Naive thymus-derived CD4-positive, alpha-beta T cell (primary cell): ENCODE measurements at regions of chr3 and their contacts with region 1.

Region 1: GRCh38 chr3:129316131-129317013 is 37.7 kb downstream of the HMCES start:
- DNase-seq: peak; percentile 80 to 96 (median 88)
- ATAC-seq: peak; percentile 75
- H3K4me3 ChIP-seq: peak overlapping the region; percentile 89
- H3K4me3 Mint-ChIP-seq: peak overlapping the region; percentile 70 to 97 (median 88)
- H3K27ac ChIP-seq: peak overlapping the region; percentile 88
- H3K27ac Mint-ChIP-seq: peak overlapping the region; percentile 80 to 94 (median 88)
- H3K4me1 ChIP-seq: peaks cover 5 to 10% of the 10 kb centered on the region in 2 donors
- H3K4me1 Mint-ChIP-seq: peaks cover 17 to 31% (median 24%) of the 10 kb centered on the region in 7 donors
- H3K27me3 ChIP-seq: no peaks in the 10 kb centered on the region
- H3K27me3 Mint-ChIP-seq: peaks cover 0 to 2% (median 0%) of the 10 kb centered on the region in 5 donors

Region 2: DNA sequence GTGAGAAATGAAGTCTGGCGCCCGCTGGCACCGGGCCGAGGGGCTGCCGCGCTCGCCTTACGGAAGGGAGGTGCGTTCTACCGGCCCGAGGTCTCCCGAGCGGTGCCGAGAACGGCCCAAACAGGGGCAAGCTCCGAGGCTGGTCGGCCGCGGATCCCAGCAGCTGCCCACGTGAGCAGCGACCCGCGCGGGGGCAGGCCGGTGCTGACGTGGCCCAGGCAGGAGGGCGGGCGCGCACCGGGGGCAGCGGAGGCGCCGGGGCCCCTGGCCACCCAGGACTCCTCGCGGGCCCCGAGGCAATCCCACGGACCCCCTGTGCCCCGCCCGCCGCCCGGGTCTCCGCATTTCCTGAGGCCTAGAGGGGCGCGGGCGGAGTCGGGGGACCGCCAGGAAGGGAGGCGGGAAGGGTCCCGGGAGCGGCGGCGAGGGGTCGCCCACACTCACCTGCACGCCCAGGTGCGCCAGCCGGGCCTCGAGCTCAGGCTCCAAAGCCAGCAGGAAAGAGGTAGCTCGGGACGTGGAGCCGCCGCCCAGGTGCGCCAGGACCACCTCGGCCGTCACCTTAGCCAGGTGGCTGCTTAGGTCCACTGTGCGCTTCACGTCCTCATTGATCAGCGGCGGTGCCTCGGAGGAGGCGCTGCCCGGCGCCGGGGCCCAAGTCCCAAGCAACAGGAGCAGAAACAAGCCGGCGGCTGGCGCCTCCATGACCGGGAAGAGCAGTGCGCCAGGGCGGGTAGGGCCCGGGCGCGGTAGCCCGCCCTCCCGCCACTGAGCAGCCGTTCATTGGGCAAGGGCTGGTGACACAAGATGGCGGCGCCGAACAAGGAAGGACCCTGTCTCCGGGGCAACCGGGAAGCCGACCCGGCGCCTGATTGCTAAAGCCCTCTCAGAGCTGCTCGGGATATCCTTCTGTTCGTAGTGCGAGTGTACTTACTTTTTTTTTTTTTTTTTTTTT is 666.0 kb before region 1 on chr3 and contains the start of gene RPN1:
- CTCF ChIA-PET with region 1: no interaction called
- POLR2A ChIA-PET with region 1: interaction called, 9 read pairs
- intact Hi-C with region 1: loop called in 1 of 2 experiments (anchors 10 kb)
- DNase-seq: peak; percentile 81 to 98 (median 97)
- ATAC-seq: peak; percentile 98
- H3K4me3 ChIP-seq: peak within 1 kb of the TSS; percentile 94
- H3K4me3 Mint-ChIP-seq: peak within 1 kb of the TSS; percentile 83 to 92 (median 90)
- H3K27ac ChIP-seq: peak within 1 kb of the TSS; percentile 99
- H3K27ac Mint-ChIP-seq: peak within 1 kb of the TSS; percentile 73 to 94 (median 92)
- H3K4me1 ChIP-seq: peaks cover 12 to 17% of the 10 kb centered on the region in 2 donors
- H3K4me1 Mint-ChIP-seq: peaks cover 25 to 43% (median 37%) of the 10 kb centered on the region in 7 donors
- H3K27me3 ChIP-seq: no peaks in the 10 kb centered on the region
- H3K27me3 Mint-ChIP-seq: no peaks in the 10 kb centered on the region
- total RNA-seq, gene RPN1: 76.7 to 203 (median 88.5) TPM

Region 3: GRCh38 chr3:129016356-129016719 is 300.0 kb before region 1 on chr3:
- CTCF ChIA-PET with region 1: interaction called, 3 read pairs
- POLR2A ChIA-PET with region 1: interaction called, 20 read pairs
- intact Hi-C with region 1: no loop called
- DNase-seq: peak in 7 of 9 donors; percentile 54 to 71 (median 65)
- ATAC-seq: peak; percentile 85
- H3K4me3 ChIP-seq: peak overlapping the region; percentile 41
- H3K4me3 Mint-ChIP-seq: peak overlapping the region; percentile 68 to 87 (median 84)
- H3K27ac ChIP-seq: peak overlapping the region; percentile 75
- H3K27ac Mint-ChIP-seq: peak overlapping the region; percentile 90 to 100 (median 97)
- H3K4me1 ChIP-seq: peaks cover 26 to 33% of the 10 kb centered on the region in 2 donors
- H3K4me1 Mint-ChIP-seq: peaks cover 31 to 66% (median 48%) of the 10 kb centered on the region in 7 donors
- H3K27me3 ChIP-seq: no peaks in the 10 kb centered on the region
- H3K27me3 Mint-ChIP-seq: no peaks in the 10 kb centered on the region

Region 4: DNA sequence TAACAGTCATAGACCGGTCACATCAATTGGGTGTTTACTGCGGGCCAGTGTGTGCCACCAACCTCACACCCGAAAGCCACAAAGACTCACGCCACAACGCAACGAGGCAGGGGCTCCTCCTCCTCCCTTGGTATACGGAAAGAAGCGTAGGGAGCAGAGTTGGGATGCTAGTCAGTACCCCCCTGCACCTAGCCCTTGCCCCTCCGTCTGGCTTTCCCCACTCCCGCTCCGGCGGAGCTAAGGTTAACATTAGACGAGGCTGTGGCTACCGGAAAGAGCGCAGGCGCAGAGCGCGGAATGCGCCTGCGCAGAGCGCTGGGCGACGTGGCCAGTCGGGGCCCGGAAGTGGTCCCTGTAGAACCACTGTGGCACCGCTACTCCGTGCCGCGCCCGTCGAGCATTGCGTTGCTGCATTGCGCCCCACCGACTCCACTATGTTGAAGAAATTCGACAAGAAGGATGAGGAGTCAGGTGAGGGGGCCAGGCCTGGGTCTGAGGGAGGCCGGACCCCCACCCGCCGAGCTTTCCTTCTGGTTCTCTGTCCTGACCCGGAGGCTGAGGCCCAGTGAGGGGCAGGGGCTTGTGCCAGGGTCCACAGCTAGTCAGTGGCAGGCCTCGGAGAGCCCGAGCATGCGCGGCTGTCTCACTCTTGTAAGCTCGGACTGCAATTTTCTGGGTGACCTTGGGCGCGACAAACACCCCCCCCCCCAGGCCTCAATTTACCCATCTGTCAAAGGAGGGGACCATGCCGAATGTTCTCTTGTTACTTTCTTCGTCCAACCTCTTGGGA is 66.9 kb before region 1 on chr3 and contains the start of gene COPG1:
- CTCF ChIA-PET with region 1: interaction called, 5 read pairs
- POLR2A ChIA-PET with region 1: interaction called, 63 read pairs
- intact Hi-C with region 1: loop called (anchors 1 kb)
- DNase-seq: peak; percentile 78 to 93 (median 89)
- ATAC-seq: peak; percentile 91
- H3K4me3 ChIP-seq: peak within 1 kb of the TSS; percentile 73
- H3K4me3 Mint-ChIP-seq: peak within 1 kb of the TSS; percentile 89 to 99 (median 95)
- H3K27ac ChIP-seq: peak within 1 kb of the TSS; percentile 98
- H3K27ac Mint-ChIP-seq: peak within 1 kb of the TSS; percentile 91 to 99 (median 96)
- H3K4me1 ChIP-seq: peaks cover 21 to 22% of the 10 kb centered on the region in 2 donors
- H3K4me1 Mint-ChIP-seq: peaks cover 29 to 65% (median 53%) of the 10 kb centered on the region in 7 donors
- H3K27me3 ChIP-seq: no peaks in the 10 kb centered on the region
- H3K27me3 Mint-ChIP-seq: peaks cover 0 to 4% (median 0%) of the 10 kb centered on the region in 5 donors
- total RNA-seq, gene COPG1: 83.3 to 177 (median 103) TPM

Region 5: GRCh38 chr3:129289201-129289921 is 27.0 kb before region 1 on chr3:
- CTCF ChIA-PET with region 1: no interaction called
- POLR2A ChIA-PET with region 1: interaction called, 251 read pairs
- intact Hi-C with region 1: no loop called
- DNase-seq: no peak
- ATAC-seq: no peak
- H3K4me3 ChIP-seq: no peak overlapping the region
- H3K4me3 Mint-ChIP-seq: no peak overlapping the region
- H3K27ac ChIP-seq: no peak overlapping the region
- H3K27ac Mint-ChIP-seq: peak overlapping the region in 3 of 9 donors; percentile 43 to 84 (median 47)
- H3K4me1 ChIP-seq: no peaks in the 10 kb centered on the region
- H3K4me1 Mint-ChIP-seq: peaks cover 13 to 37% (median 23%) of the 10 kb centered on the region in 7 donors
- H3K27me3 ChIP-seq: no peaks in the 10 kb centered on the region
- H3K27me3 Mint-ChIP-seq: no peaks in the 10 kb centered on the region

Region 6: DNA sequence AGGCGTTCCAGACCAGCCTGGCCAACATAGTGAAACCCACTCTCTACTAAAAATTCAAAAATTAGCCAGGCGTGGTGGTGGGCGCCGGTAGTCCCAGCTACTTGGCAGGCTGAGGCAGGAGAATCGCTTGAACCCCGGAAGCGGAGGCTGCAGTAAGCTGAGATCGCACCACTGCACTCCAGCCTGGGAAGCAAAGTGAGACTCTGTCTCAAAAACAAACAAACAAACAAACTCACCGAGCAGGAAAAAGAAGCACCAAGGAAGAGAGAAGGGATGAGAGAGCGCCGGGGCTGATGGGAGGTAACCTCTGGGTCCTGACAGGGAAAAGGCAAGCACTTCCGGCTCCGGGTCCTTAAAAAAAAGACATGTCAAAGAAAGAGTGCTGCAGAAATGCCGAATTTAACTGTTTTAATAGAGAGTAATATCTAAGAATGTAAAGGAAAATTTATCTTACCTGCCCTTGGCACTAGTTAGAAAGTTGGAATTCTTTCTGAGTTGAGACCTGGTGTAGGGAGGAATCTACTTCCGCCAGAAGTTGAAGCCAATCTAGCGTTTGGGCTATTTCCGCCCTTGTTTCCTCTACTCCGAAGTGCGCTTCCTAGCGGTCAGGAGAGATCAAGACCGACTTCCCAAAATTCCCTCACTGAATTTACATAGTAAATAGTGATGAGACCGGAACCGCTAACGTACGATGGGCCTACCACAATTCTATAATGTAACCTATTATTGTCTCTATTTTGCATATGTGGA is 82.9 kb after region 1 on chr3:
- CTCF ChIA-PET with region 1: no interaction called
- POLR2A ChIA-PET with region 1: interaction called, 5 read pairs
- intact Hi-C with region 1: loop called in 1 of 2 experiments (anchors 2 kb)
- DNase-seq: peak; percentile 34 to 89 (median 81)
- ATAC-seq: peak; percentile 91
- H3K4me3 ChIP-seq: peak overlapping the region; percentile 70
- H3K4me3 Mint-ChIP-seq: peak overlapping the region; percentile 89 to 100 (median 97)
- H3K27ac ChIP-seq: peak overlapping the region; percentile 88
- H3K27ac Mint-ChIP-seq: peak overlapping the region; percentile 94 to 100 (median 98)
- H3K4me1 ChIP-seq: peaks cover 10 to 13% of the 10 kb centered on the region in 2 donors
- H3K4me1 Mint-ChIP-seq: peaks cover 23 to 47% (median 37%) of the 10 kb centered on the region in 7 donors
- H3K27me3 ChIP-seq: no peaks in the 10 kb centered on the region
- H3K27me3 Mint-ChIP-seq: no peaks in the 10 kb centered on the region

Region 7: DNA sequence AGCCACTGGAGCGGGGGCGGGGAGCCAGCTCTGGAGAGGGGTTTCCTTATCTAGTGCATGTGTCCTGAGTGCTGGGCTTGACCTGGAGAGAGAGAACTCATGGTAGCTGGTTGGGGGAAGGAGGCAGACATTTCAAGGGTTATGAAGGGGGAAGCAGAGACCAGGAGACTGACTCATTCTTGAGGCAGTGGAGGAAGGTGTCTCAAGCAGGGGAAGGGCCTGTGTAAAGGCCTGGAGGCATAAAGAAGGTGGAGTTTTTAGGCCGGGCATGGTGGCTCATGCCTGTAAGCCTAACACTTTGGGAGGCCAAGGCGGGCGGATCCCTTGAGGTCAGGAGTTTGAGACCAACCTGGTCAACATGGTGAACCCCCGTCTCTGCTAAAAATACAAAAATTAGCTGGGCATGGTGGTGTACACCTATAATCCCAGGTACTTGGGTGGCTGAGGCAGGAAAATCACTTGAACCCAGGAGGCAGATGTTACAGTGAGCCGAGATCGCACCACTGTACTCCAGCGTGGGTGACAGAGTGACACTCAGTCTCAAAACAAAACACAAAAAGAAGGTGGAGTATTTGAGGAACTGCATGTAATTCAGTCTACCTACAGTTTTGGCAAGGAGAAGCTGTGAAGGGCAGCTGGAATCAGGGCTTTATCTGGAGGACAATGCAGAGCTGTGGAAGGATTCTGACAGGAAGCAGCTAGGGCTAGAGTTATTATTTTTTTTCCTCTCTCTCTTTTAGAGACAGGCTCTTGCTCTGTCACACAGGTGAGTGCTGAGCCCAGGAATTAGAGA is 233.2 kb after region 1 on chr3:
- CTCF ChIA-PET with region 1: no interaction called
- POLR2A ChIA-PET with region 1: no interaction called
- intact Hi-C with region 1: no loop called
- DNase-seq: no peak
- ATAC-seq: peak; percentile 65
- H3K4me3 ChIP-seq: no peak overlapping the region
- H3K4me3 Mint-ChIP-seq: no peak overlapping the region
- H3K27ac ChIP-seq: no peak overlapping the region
- H3K27ac Mint-ChIP-seq: no peak overlapping the region
- H3K4me1 ChIP-seq: no peaks in the 10 kb centered on the region
- H3K4me1 Mint-ChIP-seq: peaks cover 0 to 13% (median 9%) of the 10 kb centered on the region in 7 donors
- H3K27me3 ChIP-seq: no peaks in the 10 kb centered on the region
- H3K27me3 Mint-ChIP-seq: peaks cover 0 to 16% (median 6%) of the 10 kb centered on the region in 5 donors

Region 8: DNA sequence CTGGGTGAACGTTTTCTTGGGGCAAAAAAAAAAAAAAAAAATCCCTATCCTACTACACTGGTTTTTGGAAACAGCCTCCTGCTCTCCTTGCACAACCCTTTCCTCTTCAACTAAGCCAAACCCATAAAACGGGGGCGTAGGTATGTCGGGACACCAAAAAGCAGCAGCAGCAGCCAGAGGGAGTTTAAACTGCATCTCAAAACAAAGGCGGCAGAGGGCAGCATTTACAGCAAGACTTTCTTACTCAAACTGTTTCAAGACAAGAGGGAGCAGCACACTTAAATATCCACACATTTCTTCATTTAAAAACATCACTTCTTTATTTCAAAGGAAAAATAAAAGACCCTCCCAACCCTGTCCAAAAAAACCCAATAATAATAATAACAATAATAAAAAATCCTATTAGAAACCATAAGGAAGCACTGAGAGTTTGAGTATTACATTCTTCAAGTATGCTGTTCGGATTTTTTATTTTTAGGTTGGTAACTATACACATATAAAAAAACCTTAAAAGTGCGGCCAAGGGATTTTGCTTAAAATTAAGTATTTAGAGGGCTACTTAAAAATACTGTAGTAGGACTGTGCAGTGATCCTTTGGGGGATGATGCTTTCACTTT is 334.0 kb after region 1 on chr3:
- CTCF ChIA-PET with region 1: no interaction called
- POLR2A ChIA-PET with region 1: no interaction called
- intact Hi-C with region 1: no loop called
- DNase-seq: peak in 8 of 9 donors; percentile 8 to 57 (median 42)
- ATAC-seq: peak; percentile 62
- H3K4me3 ChIP-seq: no peak overlapping the region
- H3K4me3 Mint-ChIP-seq: no peak overlapping the region
- H3K27ac ChIP-seq: no peak overlapping the region
- H3K27ac Mint-ChIP-seq: peak overlapping the region in 2 of 9 donors; percentile 12 to 38
- H3K4me1 ChIP-seq: no peaks in the 10 kb centered on the region
- H3K4me1 Mint-ChIP-seq: peaks cover 0 to 4% (median 1%) of the 10 kb centered on the region in 7 donors
- H3K27me3 ChIP-seq: no peaks in the 10 kb centered on the region
- H3K27me3 Mint-ChIP-seq: peaks cover 0 to 4% (median 0%) of the 10 kb centered on the region in 5 donors